PC-9 (cell line): ENCODE measurements at regions of chr12 and their contacts with region 1.

Region 1: GRCh38 chr12:53887006-53887405 is 51.6 kb upstream of the HOXC13 start:
- DNase-seq: no peak
- H3K4me3 ChIP-seq: no peak overlapping the region
- H3K27ac ChIP-seq: no peak overlapping the region
- H3K4me1 ChIP-seq: no peaks in the 10 kb centered on the region
- H3K27me3 ChIP-seq: no peaks in the 10 kb centered on the region
- CTCF ChIP-seq: no peak

Region 2: DNA sequence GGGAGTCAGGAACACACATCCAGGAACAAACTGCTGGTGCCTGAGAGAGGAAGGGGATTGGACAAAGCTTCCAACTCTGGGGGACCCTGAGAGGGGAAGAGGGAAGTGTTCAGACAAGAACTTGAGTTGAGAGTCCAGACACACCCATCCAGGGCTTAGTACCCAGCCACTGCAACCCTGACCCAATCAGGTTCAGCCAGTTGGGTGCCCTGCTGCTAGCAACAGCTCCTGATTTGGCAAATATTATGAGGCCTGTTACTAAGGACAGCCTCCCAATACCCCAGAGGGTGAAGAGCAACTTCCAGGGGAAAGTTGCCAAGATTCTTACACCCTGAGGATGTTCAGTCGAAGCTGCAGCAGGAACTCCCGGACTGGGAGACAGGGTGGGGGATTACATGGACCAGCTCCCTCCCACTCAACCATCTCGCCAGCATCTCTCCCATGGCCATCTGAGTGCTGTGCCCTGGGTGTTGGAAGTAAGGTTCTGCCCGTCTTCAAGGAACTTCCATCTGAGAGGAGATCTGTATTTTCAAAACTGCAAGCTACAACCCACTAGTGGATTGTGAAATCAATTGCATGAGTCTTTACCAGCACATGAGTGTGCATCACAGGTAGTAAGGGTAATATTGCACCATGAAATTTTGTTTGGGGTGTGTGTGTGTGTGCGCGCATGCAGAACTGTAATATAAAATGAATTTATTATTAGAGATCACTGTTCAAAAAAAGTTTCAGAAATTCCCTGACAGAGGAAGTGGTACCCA is 1026.8 kb before region 1 on chr12:
- CTCF ChIA-PET with region 1: no interaction called
- POLR2A ChIA-PET with region 1: no interaction called
- intact Hi-C with region 1: no loop called
- DNase-seq: peak; percentile 83 to 95
- H3K4me3 ChIP-seq: no peak overlapping the region
- H3K27ac ChIP-seq: peak overlapping the region; percentile 69
- H3K4me1 ChIP-seq: peaks cover 52% of the 10 kb centered on the region
- H3K27me3 ChIP-seq: no peaks in the 10 kb centered on the region
- CTCF ChIP-seq: no peak

Region 3: DNA sequence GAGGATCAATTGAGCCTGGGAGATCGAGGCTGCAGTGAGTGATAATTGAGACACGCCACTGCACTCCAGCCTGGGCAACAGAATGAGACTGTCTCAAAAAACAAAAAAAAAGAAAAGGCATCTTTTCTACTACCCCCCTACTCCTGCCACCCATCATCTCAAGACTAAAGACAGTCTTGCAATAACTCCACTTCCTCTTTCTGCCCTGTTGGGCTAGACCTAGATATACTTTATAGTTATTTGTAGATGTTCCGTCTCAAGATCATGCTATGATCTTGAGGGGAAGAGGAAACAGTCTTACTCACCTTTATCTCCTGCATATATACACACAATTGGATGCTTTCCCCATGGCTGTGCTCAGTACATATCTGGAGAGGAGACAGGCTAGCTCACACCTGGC is 631.0 kb before region 1 on chr12:
- CTCF ChIA-PET with region 1: no interaction called
- POLR2A ChIA-PET with region 1: no interaction called
- intact Hi-C with region 1: no loop called
- DNase-seq: no peak
- H3K4me3 ChIP-seq: no peak overlapping the region
- H3K27ac ChIP-seq: no peak overlapping the region
- H3K4me1 ChIP-seq: peaks cover 12% of the 10 kb centered on the region
- H3K27me3 ChIP-seq: no peaks in the 10 kb centered on the region
- CTCF ChIP-seq: no peak

Region 4: GRCh38 chr12:53924521-53925405 is 37.8 kb after region 1 on chr12:
- CTCF ChIA-PET with region 1: no interaction called
- POLR2A ChIA-PET with region 1: no interaction called
- intact Hi-C with region 1: loop called (anchors 5 kb)
- DNase-seq: no peak
- H3K4me3 ChIP-seq: no peak overlapping the region
- H3K27ac ChIP-seq: no peak overlapping the region
- H3K4me1 ChIP-seq: no peaks in the 10 kb centered on the region
- H3K27me3 ChIP-seq: no peaks in the 10 kb centered on the region
- CTCF ChIP-seq: no peak